ENCODE measurements at regions of chr11 and their contacts with region 1.

Region 1: GRCh38 chr11:117058761-117059261 is 39.4 kb downstream of the SIK3 start:
- DNase-seq: no peak
- ATAC-seq: no peak
- H3K4me3 Mint-ChIP-seq: no peak overlapping the region
- H3K27ac Mint-ChIP-seq: no peak overlapping the region
- H3K4me1 Mint-ChIP-seq: peaks cover 54% of the 10 kb centered on the region
- H3K27me3 Mint-ChIP-seq: no peaks in the 10 kb centered on the region

Region 2: GRCh38 chr11:116808386-116809194 is 250.2 kb before region 1 on chr11:
- CTCF ChIA-PET with region 1: no interaction called
- POLR2A ChIA-PET with region 1: no interaction called
- intact Hi-C with region 1: no loop called
- DNase-seq: no peak
- ATAC-seq: no peak
- H3K4me3 Mint-ChIP-seq: no peak overlapping the region
- H3K27ac Mint-ChIP-seq: no peak overlapping the region
- H3K4me1 Mint-ChIP-seq: no peaks in the 10 kb centered on the region
- H3K27me3 Mint-ChIP-seq: no peaks in the 10 kb centered on the region

Region 3: GRCh38 chr11:116948391-116948790 is 110.4 kb before region 1 on chr11:
- CTCF ChIA-PET with region 1: interaction called, 6 read pairs
- POLR2A ChIA-PET with region 1: no interaction called
- intact Hi-C with region 1: loop called in 1 of 2 experiments (anchors 1 kb)
- DNase-seq: peak; percentile 61
- ATAC-seq: peak; percentile 90
- H3K4me3 Mint-ChIP-seq: no peak overlapping the region
- H3K27ac Mint-ChIP-seq: no peak overlapping the region
- H3K4me1 Mint-ChIP-seq: peaks cover 24% of the 10 kb centered on the region
- H3K27me3 Mint-ChIP-seq: no peaks in the 10 kb centered on the region

Region 4: GRCh38 chr11:117045196-117045595 is 13.6 kb before region 1 on chr11:
- CTCF ChIA-PET with region 1: interaction called, 5 read pairs
- POLR2A ChIA-PET with region 1: interaction called, 16 read pairs
- intact Hi-C with region 1: loop called in 1 of 2 experiments (anchors 2 kb)
- DNase-seq: no peak
- ATAC-seq: no peak
- H3K4me3 Mint-ChIP-seq: no peak overlapping the region
- H3K27ac Mint-ChIP-seq: peak overlapping the region; percentile 47
- H3K4me1 Mint-ChIP-seq: peaks cover 47% of the 10 kb centered on the region
- H3K27me3 Mint-ChIP-seq: no peaks in the 10 kb centered on the region

Region 5: DNA sequence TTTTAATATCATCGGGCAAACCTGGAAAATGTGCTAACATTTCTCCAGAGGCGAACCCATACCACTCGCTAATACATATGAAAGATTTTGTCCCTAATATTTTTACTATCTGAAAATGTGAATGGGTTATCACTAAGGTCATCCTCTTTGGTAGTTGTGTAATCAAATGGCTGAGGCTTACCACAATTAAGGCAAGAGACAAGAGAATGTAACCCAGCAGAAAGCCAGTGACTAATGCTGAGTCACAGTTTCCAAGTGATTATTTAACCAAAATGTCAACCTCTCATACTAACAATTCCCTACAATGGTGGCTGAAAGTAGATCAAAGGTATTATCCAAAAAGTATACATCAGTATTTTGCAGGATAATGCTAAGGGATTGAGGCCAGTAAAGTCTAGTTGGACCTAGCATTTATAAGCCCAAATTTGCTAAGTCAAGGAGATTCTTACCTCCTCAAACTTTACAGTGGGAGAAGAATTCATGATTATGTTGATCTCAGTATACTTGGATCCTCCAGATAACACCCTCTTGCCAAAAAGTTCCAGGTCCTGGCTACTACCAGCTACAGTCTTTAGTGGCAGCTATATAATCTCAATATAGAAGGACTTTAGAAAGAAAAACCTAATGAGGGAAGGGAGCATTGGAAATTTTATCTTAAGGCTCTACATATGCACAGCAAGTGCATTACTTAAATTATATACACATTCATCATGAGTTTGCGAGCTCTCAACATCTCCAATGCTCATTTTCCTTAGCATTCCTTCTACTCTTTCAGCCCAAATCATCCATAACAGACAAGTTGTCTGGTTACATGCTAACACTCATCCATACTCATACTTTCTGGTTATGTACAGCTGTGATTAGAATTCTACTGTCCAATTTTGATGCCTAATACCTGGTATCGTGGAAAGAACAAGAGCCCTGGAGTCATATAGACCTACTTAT is 14.0 kb after region 1 on chr11:
- CTCF ChIA-PET with region 1: interaction called, 10 read pairs
- POLR2A ChIA-PET with region 1: interaction called, 8 read pairs
- intact Hi-C with region 1: loop called (anchors 1 kb)
- DNase-seq: no peak
- ATAC-seq: peak; percentile 59
- H3K4me3 Mint-ChIP-seq: peak overlapping the region; percentile 15
- H3K27ac Mint-ChIP-seq: peak overlapping the region; percentile 42
- H3K4me1 Mint-ChIP-seq: peaks cover 61% of the 10 kb centered on the region
- H3K27me3 Mint-ChIP-seq: no peaks in the 10 kb centered on the region

Region 6: GRCh38 chr11:117092951-117093590 is 34.3 kb after region 1 on chr11:
- CTCF ChIA-PET with region 1: interaction called, 5 read pairs
- POLR2A ChIA-PET with region 1: interaction called, 3 read pairs
- intact Hi-C with region 1: loop called (anchors 1 kb)
- DNase-seq: no peak
- ATAC-seq: peak; percentile 77
- H3K4me3 Mint-ChIP-seq: peak overlapping the region; percentile 32
- H3K27ac Mint-ChIP-seq: peak overlapping the region; percentile 76
- H3K4me1 Mint-ChIP-seq: peaks cover 82% of the 10 kb centered on the region
- H3K27me3 Mint-ChIP-seq: no peaks in the 10 kb centered on the region

Region 7: DNA sequence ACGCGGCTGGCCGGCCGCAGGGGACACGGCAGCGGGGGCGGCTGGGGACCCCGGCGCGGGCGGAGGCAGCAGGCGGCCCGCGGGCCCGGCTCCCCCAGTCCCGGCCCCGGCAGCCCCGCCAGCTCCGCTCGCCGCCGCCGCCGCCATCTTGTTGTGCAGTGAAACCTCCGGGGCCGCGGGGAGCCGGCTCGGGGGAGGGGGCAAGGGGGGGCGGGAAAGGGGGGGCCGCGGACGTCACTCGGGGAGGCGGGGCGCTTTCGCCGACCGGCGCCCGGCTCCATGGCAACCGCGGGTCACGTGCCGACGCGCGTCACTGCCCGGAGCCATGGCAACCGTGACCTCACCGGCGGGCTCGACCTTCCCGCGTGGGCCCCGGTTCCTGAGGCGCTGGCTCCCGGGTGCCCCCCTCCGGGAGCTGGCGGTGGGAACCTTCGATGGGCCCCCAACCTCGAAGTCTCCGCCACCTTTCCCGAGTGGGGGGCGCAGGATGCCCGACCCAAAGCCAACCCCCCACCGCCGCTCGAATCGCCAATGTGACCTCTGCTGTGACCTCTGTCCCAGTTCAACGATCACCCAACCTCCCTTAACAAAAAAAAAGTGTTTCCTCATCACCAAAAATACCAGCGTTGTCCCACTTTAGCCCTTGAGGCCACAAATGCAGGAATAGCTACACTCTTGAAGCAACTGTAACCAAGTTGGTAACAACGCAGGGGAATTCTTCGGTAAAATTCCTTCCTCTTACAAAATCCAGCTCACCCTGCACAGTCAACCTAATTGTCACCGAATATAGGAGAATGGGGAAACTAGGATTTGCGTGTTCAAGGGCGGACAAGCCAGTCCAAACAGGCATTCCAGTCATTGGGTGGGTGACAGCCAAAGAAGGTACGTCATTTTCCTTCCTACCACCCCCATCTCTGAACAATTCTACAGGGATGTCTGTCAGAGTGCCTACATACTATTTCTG is 39.7 kb after region 1 on chr11 and contains the start of gene SIK3:
- CTCF ChIA-PET with region 1: interaction called, 5 read pairs
- POLR2A ChIA-PET with region 1: interaction called, 3 read pairs
- intact Hi-C with region 1: loop called (anchors 1 kb)
- DNase-seq: peak; percentile 96
- ATAC-seq: peak; percentile 71
- H3K4me3 Mint-ChIP-seq: peak within 1 kb of the TSS; percentile 93
- H3K27ac Mint-ChIP-seq: peak within 1 kb of the TSS; percentile 93
- H3K4me1 Mint-ChIP-seq: peaks cover 46% of the 10 kb centered on the region
- H3K27me3 Mint-ChIP-seq: no peaks in the 10 kb centered on the region
- total RNA-seq, gene SIK3: 23.6 to 25.3 TPM

Measured in activated CD4-positive, alpha-beta T cell treated with anti-CD3 and anti-CD28 coated beads for 36 hours (primary cell).